ENCODE measurements at regions of chr10 and their contacts with region 1.

Region 1: DNA sequence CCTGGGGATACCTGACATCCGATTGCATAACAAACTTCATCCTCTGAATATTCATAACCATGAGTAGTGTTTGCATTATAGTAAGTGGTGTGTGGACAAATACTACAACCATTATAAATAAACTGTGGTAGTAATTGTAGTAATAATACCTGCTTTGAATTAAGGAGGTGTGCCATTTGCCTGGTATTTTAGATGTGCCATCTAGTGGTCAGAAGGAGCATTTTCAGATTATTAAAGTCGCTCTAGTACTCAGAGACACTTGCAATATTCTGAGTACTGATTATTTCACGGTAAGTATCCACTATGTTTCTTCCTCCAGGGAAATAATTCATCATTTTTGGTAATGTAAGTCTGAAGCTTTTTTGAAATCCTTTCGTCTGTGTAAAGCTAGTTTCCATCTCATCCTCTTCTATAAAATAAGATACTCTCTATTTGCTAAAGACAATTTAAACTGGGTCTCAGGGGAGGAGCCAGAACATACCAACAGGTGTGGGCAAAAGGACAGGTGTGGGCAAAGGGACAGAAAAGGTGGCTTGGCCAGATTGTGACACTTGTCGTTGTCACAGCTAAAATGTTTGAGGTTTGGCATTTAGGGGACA is 115.3 kb upstream of the WDR11 start:
- DNase-seq: peak; percentile 44
- H3K27ac ChIP-seq: no peak overlapping the region
- CTCF ChIP-seq: peak; percentile 82

Region 2: GRCh38 chr10:120423431-120424197 is 312.3 kb before region 1 on chr10:
- CTCF ChIA-PET with region 1: interaction called, 26 read pairs
- POLR2A ChIA-PET with region 1: no interaction called
- DNase-seq: peak; percentile 81
- H3K27ac ChIP-seq: no peak overlapping the region
- CTCF ChIP-seq: peak; percentile 89

Measured in RWPE1 (cell line).